ENCODE measurements at regions of chr11 and their contacts with region 1.

Region 1: DNA sequence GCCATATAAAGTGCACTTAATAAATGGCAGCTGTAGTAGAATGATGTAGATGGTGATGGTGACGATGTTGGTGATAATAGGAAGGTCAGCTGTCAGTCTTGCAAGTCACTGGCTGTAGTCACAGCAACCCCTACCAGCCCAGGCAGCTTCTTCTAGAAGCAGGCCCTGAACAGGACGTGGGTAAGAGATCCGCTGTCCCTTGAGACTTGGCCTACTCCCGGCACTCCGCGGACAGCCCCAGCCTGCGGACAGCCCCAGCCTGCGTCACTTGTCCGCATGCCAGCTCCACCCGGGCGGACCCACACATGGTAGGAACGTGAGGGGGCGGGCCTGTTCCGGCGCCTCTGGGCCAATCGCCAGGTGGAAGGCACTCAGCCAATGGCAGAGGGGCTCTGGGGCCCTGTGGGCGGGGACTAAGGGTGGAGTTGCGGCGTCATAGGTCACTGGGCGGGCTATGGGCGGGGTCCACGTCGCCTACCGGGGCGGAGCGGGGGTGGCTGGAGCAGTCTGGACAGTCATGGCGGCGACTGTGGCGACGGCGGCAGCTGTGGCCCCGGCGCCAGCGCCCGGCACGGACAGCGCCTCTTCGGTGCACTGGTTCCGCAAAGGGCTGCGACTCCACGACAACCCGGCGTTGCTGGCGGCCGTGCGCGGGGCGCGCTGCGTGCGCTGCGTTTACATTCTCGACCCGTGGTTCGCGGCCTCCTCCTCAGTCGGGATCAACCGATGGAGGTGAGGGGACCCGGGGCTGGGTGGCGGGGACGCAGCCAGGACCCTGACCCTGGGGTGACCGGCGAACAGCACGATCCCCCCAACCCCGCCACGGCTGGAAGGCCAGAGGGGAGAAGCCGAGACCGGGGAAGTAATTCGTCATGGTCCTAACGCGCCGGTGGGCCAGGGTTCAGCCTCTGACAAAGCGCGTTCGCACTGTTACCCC is at the start of gene CRY2:
- DNase-seq: peak; percentile 99 to 100 (median 100)

Region 2: GRCh38 chr11:45804761-45805304 is 42.4 kb before region 1 on chr11 and contains the start of gene SLC35C1:
- intact Hi-C with region 1: loop called (anchors 5 kb)
- DNase-seq: peak; percentile 94 to 100 (median 98)

Region 3: DNA sequence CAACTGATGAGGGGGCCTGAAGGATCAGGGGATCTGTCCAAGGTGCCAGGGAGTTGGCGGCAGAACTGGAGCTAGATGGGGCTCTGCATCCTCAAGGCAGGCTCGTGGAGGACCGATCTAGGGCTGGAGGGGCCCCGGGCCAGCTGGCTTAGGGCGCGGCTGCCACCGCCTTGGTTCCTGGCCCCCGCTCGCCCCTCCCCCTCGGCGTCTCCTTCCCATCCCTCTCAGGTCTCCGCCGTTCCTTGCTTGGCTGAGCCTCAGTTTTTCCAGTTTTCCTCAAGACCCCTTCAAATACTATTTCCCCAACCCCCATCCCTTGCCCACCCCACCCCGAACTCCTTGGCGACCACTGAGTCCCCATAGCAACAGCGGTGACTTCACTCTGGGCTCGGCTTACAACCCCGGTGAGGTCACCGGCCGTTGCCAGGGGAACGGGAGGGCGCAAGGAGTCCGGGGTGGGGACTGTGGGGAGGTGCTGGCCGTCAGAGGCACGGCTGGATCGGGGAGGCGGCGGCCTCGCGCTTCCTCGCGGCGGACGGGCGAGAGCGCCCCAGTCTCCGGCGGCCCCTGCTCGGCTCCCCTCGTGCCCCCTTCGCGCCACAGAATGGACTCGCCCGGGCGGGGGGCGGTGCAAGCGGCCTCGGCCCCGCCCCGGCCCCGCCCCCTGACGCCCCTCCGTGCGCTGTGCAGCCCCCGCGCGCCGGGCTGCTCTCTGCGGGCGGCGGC is 52.4 kb after region 1 on chr11:
- intact Hi-C with region 1: loop called (anchors 5 kb)
- DNase-seq: peak; percentile 87 to 98 (median 94)

Region 4: DNA sequence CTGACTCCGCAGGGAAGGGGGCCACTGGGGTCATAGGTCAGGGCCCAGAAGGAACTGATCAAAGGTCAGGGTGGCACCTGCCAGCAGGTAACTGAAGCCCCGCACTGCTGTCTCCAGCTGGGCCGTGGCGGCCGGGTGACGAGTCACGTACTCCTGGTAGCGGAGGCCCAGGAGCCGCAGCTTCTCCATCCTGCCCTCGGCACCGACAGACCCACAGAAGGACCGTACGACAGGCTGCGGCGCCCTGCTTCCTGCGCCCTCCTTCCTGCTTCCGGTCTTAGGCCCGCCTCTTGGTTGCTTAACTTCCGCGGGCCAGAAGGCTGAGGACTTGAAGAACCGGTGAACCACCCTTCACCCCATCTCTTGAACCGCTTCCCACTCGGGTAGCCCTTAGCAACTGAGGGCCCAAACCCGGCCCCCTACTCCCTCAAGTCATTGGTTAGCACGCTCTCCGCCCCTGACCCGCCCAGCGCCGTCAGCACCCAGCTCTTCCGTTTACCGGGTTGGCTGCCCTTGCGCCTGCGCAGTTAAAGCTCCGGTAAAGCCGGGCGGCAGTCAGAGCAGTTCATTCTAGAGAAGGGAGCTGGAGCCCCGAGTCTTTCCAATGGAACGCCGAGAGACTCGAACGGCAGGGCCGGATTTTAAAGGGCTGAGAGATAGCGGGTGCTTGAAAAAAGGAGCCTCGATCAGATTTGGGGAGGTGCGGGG is 70.5 kb after region 1 on chr11 and contains the start of gene PEX16:
- intact Hi-C with region 1: loop called (anchors 5 kb)
- DNase-seq: peak; percentile 94 to 99 (median 97)